ENCODE measurements at regions of chr15 and their contacts with region 1.

Region 1: GRCh38 chr15:89556413-89557262 is 18.6 kb upstream of the TICRR start:
- DNase-seq: no peak
- ATAC-seq: peak; percentile 77
- H3K4me3 ChIP-seq: no peak overlapping the region
- H3K27ac ChIP-seq: no peak overlapping the region
- H3K4me1 ChIP-seq: peaks cover 4% of the 10 kb centered on the region; the same call in 1 of the 2 replicates
- H3K27me3 ChIP-seq: no peaks in the 10 kb centered on the region
- CTCF ChIP-seq: peak; percentile 54 to 72 (median 65)
- EP300 ChIP-seq: no peak
- POLR2A ChIP-seq: no peak
- RAD21 ChIP-seq: peak; percentile 62

Region 2: GRCh38 chr15:89496155-89497098 is 60.2 kb before region 1 on chr15 and contains the start of gene RHCG:
- CTCF ChIA-PET with region 1: interaction called, 42 read pairs
- POLR2A ChIA-PET with region 1: no interaction called
- RAD21 ChIA-PET with region 1: interaction called, 3 read pairs
- SMC1A ChIA-PET with region 1: interaction called, 4 read pairs
- in situ Hi-C with region 1: no loop called
- intact Hi-C with region 1: loop called (anchors 1 kb)
- DNase-seq: no peak
- ATAC-seq: peak; percentile 78
- H3K4me3 ChIP-seq: no peak within 1 kb of the TSS
- H3K27ac ChIP-seq: no peak within 1 kb of the TSS
- H3K4me1 ChIP-seq: no peaks in the 10 kb centered on the region
- H3K27me3 ChIP-seq: peaks cover 3 to 7% of the 10 kb centered on the region in 2 experiments
- CTCF ChIP-seq: peak in 2 of 3 experiments; percentile 41 to 43; a peak in 3 of 6 replicates
- EP300 ChIP-seq: no peak
- POLR2A ChIP-seq: no peak
- RAD21 ChIP-seq: no peak
- polyA plus RNA-seq, gene RHCG: not detected

Region 3: GRCh38 chr15:89912674-89913396 is 356.2 kb after region 1 on chr15 and contains the start of gene ARPIN:
- CTCF ChIA-PET with region 1: no interaction called
- POLR2A ChIA-PET with region 1: no interaction called
- RAD21 ChIA-PET with region 1: no interaction called
- SMC1A ChIA-PET with region 1: no interaction called
- in situ Hi-C with region 1: no loop called
- intact Hi-C with region 1: no loop called
- DNase-seq: no peak
- ATAC-seq: no peak
- H3K4me3 ChIP-seq: no peak within 1 kb of the TSS
- H3K27ac ChIP-seq: no peak within 1 kb of the TSS
- H3K4me1 ChIP-seq: no peaks in the 10 kb centered on the region
- H3K27me3 ChIP-seq: peaks cover 1 to 4% of the 10 kb centered on the region in 2 experiments; a peak in 2 of 4 replicates
- CTCF ChIP-seq: no peak
- EP300 ChIP-seq: no peak
- POLR2A ChIP-seq: no peak
- RAD21 ChIP-seq: no peak
- polyA plus RNA-seq, gene ARPIN: 0.02 TPM in 1 of 2 experiments, not detected in the other

Measured in GM12878 (cell line).